HCT116 (cell line): ENCODE measurements at regions of chr15 and their contacts with region 1.

Region 1: DNA sequence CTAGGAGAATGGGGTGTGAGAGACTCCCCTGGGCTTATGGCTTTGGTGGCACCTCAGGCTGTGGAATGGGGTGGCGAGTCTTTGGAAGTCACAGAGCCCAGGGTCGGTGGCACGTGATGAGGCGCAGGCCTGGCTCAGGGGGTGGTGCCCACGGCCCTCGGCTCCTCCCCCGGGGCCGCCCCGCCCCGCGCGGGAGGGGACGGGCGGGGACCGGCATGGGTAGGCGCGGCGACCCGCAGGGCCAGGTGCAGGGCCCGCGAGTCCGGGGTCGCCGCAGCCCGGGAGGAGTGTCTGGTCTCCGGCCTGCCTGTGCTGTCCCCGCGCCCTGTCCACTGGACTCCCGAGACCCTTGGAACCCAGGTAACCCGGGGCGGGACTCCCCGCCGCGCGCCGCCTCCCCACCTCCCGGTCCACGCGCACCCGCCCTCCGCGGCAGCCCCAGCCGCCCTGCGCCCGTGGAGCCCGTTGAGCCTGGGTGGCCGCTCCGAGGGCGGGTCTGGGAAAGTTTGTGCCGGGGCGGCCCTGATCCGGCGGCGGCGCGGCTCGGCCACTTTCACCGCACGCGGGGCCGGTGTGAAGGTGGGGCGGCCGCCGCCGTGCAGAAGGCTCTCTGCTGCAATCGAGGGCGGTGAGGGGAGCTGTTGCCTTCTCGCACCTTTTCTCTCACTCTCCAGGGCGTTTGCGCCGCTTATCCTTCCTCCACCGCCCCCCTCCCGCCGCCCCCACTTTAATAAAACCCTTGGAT is at the start of gene PAQR5:
- DNase-seq: no peak
- ATAC-seq: peak; percentile 95
- H3K4me3 ChIP-seq: peak within 1 kb of the TSS; percentile 52 to 72
- H3K27ac ChIP-seq: peak within 1 kb of the TSS; percentile 50; the same call in 1 of the 2 replicates
- H3K4me1 ChIP-seq: peaks cover 20 to 40% of the 10 kb centered on the region in 2 experiments; a peak in 3 of 4 replicates
- H3K27me3 ChIP-seq: no peaks in the 10 kb centered on the region
- CTCF ChIP-seq: no peak
- POLR2A ChIP-seq: no peak
- RAD21 ChIP-seq: no peak
- total RNA-seq, gene PAQR5: 34.0 TPM

Region 2: GRCh38 chr15:69265347-69265955 is 33.4 kb before region 1 on chr15:
- CTCF ChIA-PET with region 1: no interaction called
- POLR2A ChIA-PET with region 1: no interaction called
- RAD21 ChIA-PET with region 1: no interaction called
- intact Hi-C with region 1: loop called (anchors 1 kb)
- DNase-seq: peak; percentile 34
- ATAC-seq: peak; percentile 61
- H3K4me3 ChIP-seq: no peak overlapping the region
- H3K27ac ChIP-seq: no peak overlapping the region
- H3K4me1 ChIP-seq: no peaks in the 10 kb centered on the region
- H3K27me3 ChIP-seq: no peaks in the 10 kb centered on the region
- CTCF ChIP-seq: peak; percentile 49 to 73 (median 57); a peak in 5 of 6 replicates
- POLR2A ChIP-seq: no peak
- RAD21 ChIP-seq: peak; percentile 73